CD14-positive monocyte (primary cell): ENCODE measurements at regions of chr17 and their contacts with region 1.

Region 1: DNA sequence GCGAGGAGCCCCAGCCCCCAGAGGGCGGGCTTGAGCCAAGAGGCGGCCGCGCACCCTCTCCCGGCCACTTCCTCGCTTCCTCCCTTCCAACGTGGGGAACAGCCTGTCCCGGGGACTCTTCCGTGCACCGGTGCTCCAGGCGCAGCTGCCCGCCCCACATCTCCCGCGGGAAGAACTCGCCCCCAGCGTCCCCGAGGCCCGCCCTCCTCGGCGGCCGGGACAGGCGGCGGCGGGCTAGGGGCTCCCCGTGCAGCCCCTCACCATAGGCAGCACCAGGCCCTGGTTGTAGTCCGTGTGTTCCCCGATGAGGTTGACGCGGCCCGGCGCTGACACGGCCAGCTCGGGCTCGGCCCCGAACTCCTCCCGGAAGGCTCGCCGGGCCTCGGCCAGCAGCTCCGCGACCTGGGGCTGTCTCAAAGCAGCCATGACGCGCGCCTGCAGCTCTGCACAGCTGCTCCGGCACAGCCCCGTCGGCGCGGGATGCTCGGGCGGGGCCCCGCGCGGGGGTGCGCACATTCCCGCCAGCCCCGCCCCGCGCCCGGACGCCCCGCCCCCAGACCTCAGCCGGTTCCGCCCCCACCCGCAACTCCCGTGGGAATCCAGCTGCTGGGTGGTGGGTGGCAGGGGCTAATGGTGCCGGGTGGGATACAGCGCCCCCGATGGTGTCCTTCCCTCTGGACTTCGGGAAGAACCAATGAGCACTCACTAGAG is at the start of gene GALK1:
- DNase-seq: peak; percentile 69 to 81 (median 79)
- H3K4me3 ChIP-seq: peak within 1 kb of the TSS; percentile 49 to 91 (median 71)
- H3K4me3 Mint-ChIP-seq: peak within 1 kb of the TSS; percentile 79 to 86
- H3K27ac ChIP-seq: peak within 1 kb of the TSS; percentile 36 to 75
- H3K27ac Mint-ChIP-seq: peak within 1 kb of the TSS; percentile 68 to 87 (median 80)
- H3K4me1 ChIP-seq: peaks cover 14 to 23% of the 10 kb centered on the region in 2 donors
- H3K4me1 Mint-ChIP-seq: peaks cover 11% of the 10 kb centered on the region
- H3K27me3 ChIP-seq: no peaks in the 10 kb centered on the region
- H3K27me3 Mint-ChIP-seq: peaks cover 0 to 2% (median 0%) of the 10 kb centered on the region in 3 donors
- CTCF ChIP-seq: peak; percentile 83
- polyA plus RNA-seq, gene GALK1: 44.8 to 108 (median 84.3) TPM

Region 2: DNA sequence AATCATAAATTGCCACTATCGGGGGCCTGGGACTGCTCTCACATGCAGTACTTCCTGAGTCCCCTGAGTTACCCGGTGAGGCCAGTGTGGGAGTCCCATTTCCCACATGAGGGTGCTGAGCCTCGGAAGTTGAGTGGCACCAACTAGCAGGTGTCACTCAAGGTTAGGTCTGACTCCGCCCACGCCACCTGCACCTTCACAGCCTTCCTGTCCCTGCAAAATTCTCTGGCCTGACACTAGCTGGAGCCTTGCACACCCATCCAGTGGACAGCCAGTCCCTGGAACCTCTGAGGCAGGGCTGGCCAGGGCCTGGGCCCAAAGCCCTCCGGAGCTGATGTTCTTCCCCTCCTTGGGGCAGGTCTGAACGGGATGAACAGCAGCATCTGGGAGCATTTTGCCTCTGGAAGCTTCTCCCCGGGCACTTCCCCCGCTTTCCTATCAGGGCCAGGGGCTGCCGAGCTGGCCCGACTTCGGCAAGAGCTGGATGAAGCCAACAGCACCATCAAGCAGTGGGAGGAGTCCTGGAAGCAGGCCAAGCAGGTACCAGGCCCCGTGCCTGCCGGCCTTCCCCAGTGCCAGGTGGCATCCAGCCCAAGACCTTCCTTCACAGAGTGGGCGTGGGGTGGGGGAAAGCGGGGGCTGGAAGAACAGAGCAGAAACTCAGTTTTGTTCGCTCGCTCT is 57.4 kb after region 1 on chr17:
- intact Hi-C with region 1: loop called in 1 of 2 experiments (anchors 5 kb)
- DNase-seq: no peak
- H3K4me3 ChIP-seq: no peak overlapping the region
- H3K4me3 Mint-ChIP-seq: no peak overlapping the region
- H3K27ac ChIP-seq: no peak overlapping the region
- H3K27ac Mint-ChIP-seq: peak overlapping the region in 2 of 7 donors; percentile 57 to 72
- H3K4me1 ChIP-seq: no peaks in the 10 kb centered on the region
- H3K4me1 Mint-ChIP-seq: peaks cover 2% of the 10 kb centered on the region
- H3K27me3 ChIP-seq: no peaks in the 10 kb centered on the region
- H3K27me3 Mint-ChIP-seq: no peaks in the 10 kb centered on the region
- CTCF ChIP-seq: no peak